PC-9 (cell line): ENCODE measurements at regions of chr5 and their contacts with region 1.

Region 1: DNA sequence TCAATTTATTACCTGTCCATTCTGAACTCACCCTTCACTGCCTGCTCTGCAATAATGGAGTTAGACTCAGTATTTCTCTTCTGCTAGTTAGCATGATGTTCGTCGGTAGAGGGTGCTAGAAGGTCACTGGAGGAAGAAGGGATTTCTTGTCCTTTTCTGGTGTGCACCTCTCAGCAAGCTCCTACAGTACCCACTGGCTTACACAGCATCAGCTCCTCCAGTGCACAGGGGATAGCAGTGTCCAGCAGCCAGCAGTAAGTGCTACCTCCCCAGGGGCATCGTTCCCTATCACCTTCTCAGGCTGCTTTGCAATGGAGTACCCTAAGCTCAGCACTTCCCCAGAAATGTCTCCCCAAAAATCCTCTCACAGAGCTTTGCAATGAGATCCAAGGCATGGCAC is 45.9 kb upstream of the APC start:
- DNase-seq: peak; percentile 32 to 56
- H3K4me3 ChIP-seq: no peak overlapping the region
- H3K27ac ChIP-seq: no peak overlapping the region
- H3K4me1 ChIP-seq: no peaks in the 10 kb centered on the region
- H3K27me3 ChIP-seq: no peaks in the 10 kb centered on the region
- CTCF ChIP-seq: peak; percentile 67

Region 2: GRCh38 chr5:112525217-112525616 is 166.5 kb before region 1 on chr5:
- CTCF ChIA-PET with region 1: no interaction called
- POLR2A ChIA-PET with region 1: no interaction called
- intact Hi-C with region 1: no loop called
- DNase-seq: no peak
- H3K4me3 ChIP-seq: no peak overlapping the region
- H3K27ac ChIP-seq: no peak overlapping the region
- H3K4me1 ChIP-seq: no peaks in the 10 kb centered on the region
- H3K27me3 ChIP-seq: no peaks in the 10 kb centered on the region
- CTCF ChIP-seq: no peak

Region 3: GRCh38 chr5:112604732-112605630 is 86.8 kb before region 1 on chr5:
- CTCF ChIA-PET with region 1: no interaction called
- POLR2A ChIA-PET with region 1: no interaction called
- intact Hi-C with region 1: no loop called
- DNase-seq: no peak
- H3K4me3 ChIP-seq: no peak overlapping the region
- H3K27ac ChIP-seq: no peak overlapping the region
- H3K4me1 ChIP-seq: no peaks in the 10 kb centered on the region
- H3K27me3 ChIP-seq: no peaks in the 10 kb centered on the region
- CTCF ChIP-seq: no peak

Region 4: GRCh38 chr5:112757468-112758208 is 65.9 kb after region 1 on chr5:
- CTCF ChIA-PET with region 1: interaction called, 5 read pairs
- POLR2A ChIA-PET with region 1: no interaction called
- intact Hi-C with region 1: loop called (anchors 1 kb)
- DNase-seq: peak; percentile 1 to 54
- H3K4me3 ChIP-seq: no peak overlapping the region
- H3K27ac ChIP-seq: no peak overlapping the region
- H3K4me1 ChIP-seq: no peaks in the 10 kb centered on the region
- H3K27me3 ChIP-seq: no peaks in the 10 kb centered on the region
- CTCF ChIP-seq: peak; percentile 85

Region 5: DNA sequence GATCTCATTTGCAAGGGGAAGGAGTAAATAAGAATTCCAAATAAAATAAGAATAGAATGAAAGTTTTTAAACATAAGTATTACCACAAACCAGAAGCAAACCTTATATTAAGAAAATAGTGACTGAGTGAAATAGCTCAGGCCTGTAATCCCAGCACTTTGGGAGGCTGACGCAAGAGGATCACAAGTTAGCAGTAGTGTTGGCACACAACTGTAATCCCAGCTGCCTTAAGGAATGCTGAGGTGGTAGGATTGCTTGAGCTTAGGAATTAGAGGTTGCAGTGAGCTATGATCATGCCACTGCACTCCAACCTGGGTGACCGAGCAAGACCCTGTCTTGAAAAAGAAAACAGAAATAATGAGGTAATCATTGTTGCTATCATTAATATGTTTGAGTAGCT is 93.0 kb after region 1 on chr5:
- CTCF ChIA-PET with region 1: no interaction called
- POLR2A ChIA-PET with region 1: interaction called, 11 read pairs
- intact Hi-C with region 1: no loop called
- DNase-seq: no peak
- H3K4me3 ChIP-seq: no peak overlapping the region
- H3K27ac ChIP-seq: no peak overlapping the region
- H3K4me1 ChIP-seq: no peaks in the 10 kb centered on the region
- H3K27me3 ChIP-seq: no peaks in the 10 kb centered on the region
- CTCF ChIP-seq: no peak

Region 6: DNA sequence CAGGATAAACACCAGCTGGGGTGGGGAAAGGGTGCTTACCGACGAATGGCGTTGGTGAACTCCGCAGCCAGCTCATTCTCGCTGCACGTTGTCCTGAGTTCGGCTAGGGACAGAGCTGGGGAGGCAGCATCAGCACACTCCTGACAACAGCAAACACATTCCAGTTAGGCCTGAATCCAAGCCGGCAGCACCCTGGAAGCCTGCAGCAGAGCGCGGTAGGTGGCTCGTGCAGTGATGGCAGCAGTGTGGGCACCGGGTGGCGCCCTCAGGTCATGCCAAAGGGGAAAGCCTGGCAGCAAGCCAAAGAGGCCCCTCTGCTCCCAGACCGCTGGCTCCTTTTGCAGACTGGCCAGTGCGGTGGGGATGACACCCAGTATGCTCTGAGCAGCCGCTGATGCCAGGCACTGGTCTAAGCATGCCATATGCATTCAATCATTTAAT is 351.8 kb after region 1 on chr5:
- CTCF ChIA-PET with region 1: no interaction called
- POLR2A ChIA-PET with region 1: no interaction called
- intact Hi-C with region 1: no loop called
- DNase-seq: no peak
- H3K4me3 ChIP-seq: no peak overlapping the region
- H3K27ac ChIP-seq: no peak overlapping the region
- H3K4me1 ChIP-seq: 0 out of 2 replicates have a peak, but pooled peaks cover 4% of the 10 kb centered on the region
- H3K27me3 ChIP-seq: no peaks in the 10 kb centered on the region
- CTCF ChIP-seq: no peak